Activated CD8-positive, alpha-beta T cell treated with anti-CD3 and anti-CD28 coated beads for 36 hours (primary cell): ENCODE measurements at regions of chr1 and their contacts with region 1.

Region 1: GRCh38 chr1:175023043-175023921 is at the start of gene MRPS14:
- DNase-seq: peak; percentile 99
- ATAC-seq: peak; percentile 92
- H3K4me3 Mint-ChIP-seq: peak within 1 kb of the TSS; percentile 93
- H3K27ac Mint-ChIP-seq: peak within 1 kb of the TSS; percentile 93
- H3K4me1 Mint-ChIP-seq: peaks cover 30% of the 10 kb centered on the region
- H3K27me3 Mint-ChIP-seq: no peaks in the 10 kb centered on the region
- CTCF ChIP-seq: no peak
- total RNA-seq, gene MRPS14: 42.1 to 45.7 TPM

Region 2: GRCh38 chr1:175005085-175005783 is 18.0 kb before region 1 on chr1:
- CTCF ChIA-PET with region 1: interaction called, 21 read pairs
- POLR2A ChIA-PET with region 1: interaction called, 53 read pairs
- intact Hi-C with region 1: loop called (anchors 2 kb)
- DNase-seq: no peak
- ATAC-seq: no peak
- H3K4me3 Mint-ChIP-seq: no peak overlapping the region
- H3K27ac Mint-ChIP-seq: peak overlapping the region; percentile 80
- H3K4me1 Mint-ChIP-seq: peaks cover 53% of the 10 kb centered on the region
- H3K27me3 Mint-ChIP-seq: no peaks in the 10 kb centered on the region
- CTCF ChIP-seq: no peak

Region 3: GRCh38 chr1:175124861-175125260 is 101.6 kb after region 1 on chr1:
- CTCF ChIA-PET with region 1: interaction called, 122 read pairs
- POLR2A ChIA-PET with region 1: interaction called, 3 read pairs
- intact Hi-C with region 1: no loop called
- DNase-seq: no peak
- ATAC-seq: no peak
- H3K4me3 Mint-ChIP-seq: no peak overlapping the region
- H3K27ac Mint-ChIP-seq: no peak overlapping the region
- H3K4me1 Mint-ChIP-seq: no peaks in the 10 kb centered on the region
- H3K27me3 Mint-ChIP-seq: no peaks in the 10 kb centered on the region
- CTCF ChIP-seq: no peak

Region 4: DNA sequence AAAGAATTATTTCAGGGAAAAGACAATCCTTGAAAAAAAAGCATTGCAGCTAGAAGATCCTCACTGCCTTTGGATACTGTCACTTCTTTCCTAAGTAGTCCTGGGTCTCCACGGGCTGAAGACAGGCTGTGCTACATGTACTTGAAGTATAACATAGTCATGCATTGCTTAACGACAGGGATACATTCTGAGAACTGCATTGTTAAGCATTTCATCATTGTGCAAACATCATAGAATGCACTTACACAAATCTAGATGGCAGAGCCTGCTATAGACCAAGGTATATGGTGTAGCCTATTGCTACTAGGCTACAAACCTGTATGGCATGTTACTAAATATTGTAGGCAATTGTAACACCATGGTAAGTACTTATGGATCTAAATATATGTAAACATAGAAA is 115.3 kb after region 1 on chr1:
- CTCF ChIA-PET with region 1: no interaction called
- POLR2A ChIA-PET with region 1: no interaction called
- intact Hi-C with region 1: no loop called
- DNase-seq: no peak
- ATAC-seq: no peak
- H3K4me3 Mint-ChIP-seq: no peak overlapping the region
- H3K27ac Mint-ChIP-seq: no peak overlapping the region
- H3K4me1 Mint-ChIP-seq: no peaks in the 10 kb centered on the region
- H3K27me3 Mint-ChIP-seq: peaks cover 14% of the 10 kb centered on the region
- CTCF ChIP-seq: no peak